MCF 10A (cell line): ENCODE measurements at regions of chr12 and their contacts with region 1.

Region 1: GRCh38 chr12:818733-819132 is 66.4 kb downstream of the WNK1 start:
- DNase-seq: peak; percentile 16
- H3K4me3 Mint-ChIP-seq: no peak overlapping the region
- H3K27ac Mint-ChIP-seq: peak overlapping the region; percentile 83
- H3K4me1 Mint-ChIP-seq: peaks cover 28% of the 10 kb centered on the region
- H3K27me3 Mint-ChIP-seq: no peaks in the 10 kb centered on the region
- CTCF ChIP-seq: no peak

Region 2: DNA sequence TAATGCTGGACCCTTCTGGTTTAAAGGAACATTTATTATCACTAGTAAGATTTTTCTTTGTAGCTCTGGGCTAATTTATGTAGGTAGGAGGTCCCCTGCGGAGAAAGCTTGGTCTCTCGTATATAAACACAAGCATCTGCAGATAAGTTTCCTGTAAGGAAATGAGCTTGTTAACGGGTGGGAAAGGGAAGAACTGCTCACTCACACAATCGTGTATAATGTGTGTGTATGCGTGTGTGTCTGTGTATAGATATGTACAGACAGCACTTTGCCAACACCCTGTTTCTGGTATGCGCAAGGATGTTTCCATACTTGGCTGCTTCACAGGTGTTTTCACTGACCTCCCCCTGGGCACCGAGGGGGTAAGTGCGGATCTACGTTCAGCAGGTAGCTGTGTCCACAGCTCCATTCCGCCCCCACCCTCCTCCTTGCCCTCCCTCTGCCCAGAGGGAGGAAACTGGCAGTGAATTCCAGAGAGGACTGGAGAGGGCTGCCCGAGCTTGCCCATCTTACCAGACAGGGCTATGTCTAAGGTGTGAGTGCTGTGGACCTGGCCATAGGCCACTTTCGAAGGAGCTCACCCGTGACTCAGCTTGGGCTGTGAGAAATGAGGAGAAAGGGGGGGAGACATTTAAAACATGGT is 220.7 kb before region 1 on chr12:
- CTCF ChIA-PET with region 1: interaction called, 5 read pairs
- POLR2A ChIA-PET with region 1: interaction called, 11 read pairs
- intact Hi-C with region 1: no loop called
- DNase-seq: peak; percentile 92
- H3K4me3 Mint-ChIP-seq: peak overlapping the region; percentile 15
- H3K27ac Mint-ChIP-seq: peak overlapping the region; percentile 18
- H3K4me1 Mint-ChIP-seq: peaks cover 20% of the 10 kb centered on the region
- H3K27me3 Mint-ChIP-seq: no peaks in the 10 kb centered on the region
- CTCF ChIP-seq: no peak

Region 3: DNA sequence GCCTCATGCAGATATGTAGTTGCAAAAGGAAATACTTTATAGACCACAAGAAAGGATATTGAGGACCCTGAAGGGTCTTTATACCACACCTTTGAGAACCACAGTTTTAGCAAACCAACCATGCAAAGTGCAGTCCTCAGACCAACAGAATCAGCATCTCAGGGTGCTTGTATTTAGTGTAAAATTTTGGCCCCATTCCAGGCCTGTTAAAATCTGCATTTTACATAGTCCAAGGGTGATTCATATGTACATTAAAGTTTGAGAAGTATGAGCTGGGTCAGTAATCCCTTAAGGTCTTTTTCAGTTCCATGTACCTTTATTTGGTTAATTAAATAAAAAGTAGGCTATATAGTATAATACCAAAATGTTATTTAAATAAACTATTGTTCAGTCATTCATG is 24.9 kb after region 1 on chr12:
- CTCF ChIA-PET with region 1: interaction called, 13 read pairs
- POLR2A ChIA-PET with region 1: interaction called, 12 read pairs
- intact Hi-C with region 1: no loop called
- DNase-seq: peak; percentile 68
- H3K4me3 Mint-ChIP-seq: no peak overlapping the region
- H3K27ac Mint-ChIP-seq: no peak overlapping the region
- H3K4me1 Mint-ChIP-seq: peaks cover 24% of the 10 kb centered on the region
- H3K27me3 Mint-ChIP-seq: no peaks in the 10 kb centered on the region
- CTCF ChIP-seq: no peak

Region 4: DNA sequence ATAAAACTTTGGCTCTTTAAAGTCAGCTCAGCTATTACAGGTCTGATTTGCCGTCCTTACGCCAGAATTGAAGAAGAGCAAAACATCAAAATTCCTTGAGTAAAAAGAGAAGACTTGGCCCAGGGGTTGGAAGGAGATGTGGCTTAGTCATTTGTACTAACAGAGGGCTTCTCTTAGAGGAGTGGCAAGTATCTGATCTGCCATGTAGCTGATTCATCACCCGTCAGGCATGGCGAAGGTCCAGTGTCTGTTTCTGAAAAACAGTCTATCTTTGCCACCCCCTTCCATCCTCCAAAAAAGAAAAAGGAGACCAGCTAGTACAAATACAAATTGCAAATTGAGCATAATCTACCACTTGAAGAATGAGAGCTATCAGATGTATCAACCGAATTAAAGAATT is 38.9 kb after region 1 on chr12:
- CTCF ChIA-PET with region 1: interaction called, 45 read pairs
- POLR2A ChIA-PET with region 1: interaction called, 43 read pairs
- intact Hi-C with region 1: loop called (anchors 1 kb)
- DNase-seq: peak; percentile 88
- H3K4me3 Mint-ChIP-seq: peak overlapping the region; percentile 47
- H3K27ac Mint-ChIP-seq: peak overlapping the region; percentile 92
- H3K4me1 Mint-ChIP-seq: peaks cover 24% of the 10 kb centered on the region
- H3K27me3 Mint-ChIP-seq: no peaks in the 10 kb centered on the region
- CTCF ChIP-seq: no peak

Region 5: DNA sequence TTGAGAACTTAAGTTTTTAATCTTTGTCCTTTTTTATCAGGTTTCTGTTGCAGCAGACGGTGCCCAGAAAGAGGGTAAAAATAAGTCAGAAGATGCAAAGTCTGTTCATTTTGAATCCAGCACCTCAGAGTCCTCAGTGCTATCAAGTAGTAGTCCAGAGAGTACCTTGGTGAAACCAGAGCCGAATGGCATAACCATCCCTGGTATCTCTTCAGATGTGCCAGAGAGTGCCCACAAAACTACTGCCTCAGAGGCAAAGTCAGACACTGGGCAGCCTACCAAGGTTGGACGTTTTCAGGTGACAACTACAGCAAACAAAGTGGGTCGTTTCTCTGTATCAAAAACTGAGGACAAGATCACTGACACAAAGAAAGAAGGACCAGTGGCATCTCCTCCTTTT is 77.3 kb after region 1 on chr12:
- CTCF ChIA-PET with region 1: interaction called, 5 read pairs
- POLR2A ChIA-PET with region 1: interaction called, 4 read pairs
- intact Hi-C with region 1: loop called (anchors 5 kb)
- DNase-seq: no peak
- H3K4me3 Mint-ChIP-seq: no peak overlapping the region
- H3K27ac Mint-ChIP-seq: no peak overlapping the region
- H3K4me1 Mint-ChIP-seq: peaks cover 6% of the 10 kb centered on the region
- H3K27me3 Mint-ChIP-seq: no peaks in the 10 kb centered on the region
- CTCF ChIP-seq: no peak

Region 6: DNA sequence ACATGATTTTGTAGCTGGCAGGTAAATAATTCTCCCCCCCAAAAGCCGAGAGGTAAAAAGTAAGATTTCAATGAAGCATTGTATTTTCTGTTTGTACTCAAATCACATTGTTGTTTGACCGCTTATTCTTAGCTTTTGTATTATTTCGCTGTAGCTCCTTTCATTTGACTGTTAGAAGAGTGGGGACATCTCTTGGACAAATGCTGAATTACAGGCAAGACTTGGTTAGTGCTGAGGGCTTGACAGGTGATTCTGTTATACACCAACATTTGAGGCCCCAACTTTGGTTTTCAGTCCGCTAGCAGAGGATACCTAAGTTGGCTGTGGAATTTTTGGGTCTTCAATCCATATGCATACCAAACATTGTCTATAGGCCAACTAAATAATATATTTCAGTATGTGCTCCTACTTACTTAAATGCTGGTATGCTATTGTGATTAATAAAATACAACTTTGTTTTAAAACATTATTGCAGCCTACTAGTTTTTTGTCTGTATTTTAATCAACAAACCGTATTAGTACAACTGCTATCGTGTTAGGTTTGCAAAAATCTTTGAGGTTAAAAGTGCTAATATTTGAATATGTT is 274.5 kb after region 1 on chr12:
- CTCF ChIA-PET with region 1: interaction called, 7 read pairs
- POLR2A ChIA-PET with region 1: interaction called, 3 read pairs
- intact Hi-C with region 1: loop called (anchors 5 kb)
- DNase-seq: peak; percentile 75
- H3K4me3 Mint-ChIP-seq: no peak overlapping the region
- H3K27ac Mint-ChIP-seq: no peak overlapping the region
- H3K4me1 Mint-ChIP-seq: peaks cover 10% of the 10 kb centered on the region
- H3K27me3 Mint-ChIP-seq: no peaks in the 10 kb centered on the region
- CTCF ChIP-seq: peak; percentile 75